ENCODE measurements at regions of chr6 and their contacts with region 1.

Region 1: GRCh38 chr6:24933868-24934401 is 1.8 kb downstream of the RIPOR2 start:
- DNase-seq: peak; percentile 88
- H3K4me3 Mint-ChIP-seq: peak overlapping the region; percentile 89
- H3K27ac Mint-ChIP-seq: peak overlapping the region; percentile 95
- H3K4me1 Mint-ChIP-seq: peaks cover 86% of the 10 kb centered on the region
- H3K27me3 Mint-ChIP-seq: no peaks in the 10 kb centered on the region

Region 2: GRCh38 chr6:24774696-24775519 is 159.0 kb before region 1 on chr6 and contains the start of gene GMNN:
- intact Hi-C with region 1: loop called (anchors 5 kb)
- DNase-seq: peak; percentile 100
- H3K4me3 Mint-ChIP-seq: peak within 1 kb of the TSS; percentile 99
- H3K27ac Mint-ChIP-seq: peak within 1 kb of the TSS; percentile 99
- H3K4me1 Mint-ChIP-seq: peaks cover 32% of the 10 kb centered on the region
- H3K27me3 Mint-ChIP-seq: no peaks in the 10 kb centered on the region
- total RNA-seq, gene GMNN: 71.0 and 76.8 TPM in 2 replicates

Region 3: GRCh38 chr6:24902782-24903181 is 31.2 kb before region 1 on chr6:
- intact Hi-C with region 1: loop called (anchors 5 kb)
- DNase-seq: no peak
- H3K4me3 Mint-ChIP-seq: peak overlapping the region; percentile 23
- H3K27ac Mint-ChIP-seq: peak overlapping the region; percentile 90
- H3K4me1 Mint-ChIP-seq: peaks cover 75% of the 10 kb centered on the region
- H3K27me3 Mint-ChIP-seq: no peaks in the 10 kb centered on the region

Region 4: DNA sequence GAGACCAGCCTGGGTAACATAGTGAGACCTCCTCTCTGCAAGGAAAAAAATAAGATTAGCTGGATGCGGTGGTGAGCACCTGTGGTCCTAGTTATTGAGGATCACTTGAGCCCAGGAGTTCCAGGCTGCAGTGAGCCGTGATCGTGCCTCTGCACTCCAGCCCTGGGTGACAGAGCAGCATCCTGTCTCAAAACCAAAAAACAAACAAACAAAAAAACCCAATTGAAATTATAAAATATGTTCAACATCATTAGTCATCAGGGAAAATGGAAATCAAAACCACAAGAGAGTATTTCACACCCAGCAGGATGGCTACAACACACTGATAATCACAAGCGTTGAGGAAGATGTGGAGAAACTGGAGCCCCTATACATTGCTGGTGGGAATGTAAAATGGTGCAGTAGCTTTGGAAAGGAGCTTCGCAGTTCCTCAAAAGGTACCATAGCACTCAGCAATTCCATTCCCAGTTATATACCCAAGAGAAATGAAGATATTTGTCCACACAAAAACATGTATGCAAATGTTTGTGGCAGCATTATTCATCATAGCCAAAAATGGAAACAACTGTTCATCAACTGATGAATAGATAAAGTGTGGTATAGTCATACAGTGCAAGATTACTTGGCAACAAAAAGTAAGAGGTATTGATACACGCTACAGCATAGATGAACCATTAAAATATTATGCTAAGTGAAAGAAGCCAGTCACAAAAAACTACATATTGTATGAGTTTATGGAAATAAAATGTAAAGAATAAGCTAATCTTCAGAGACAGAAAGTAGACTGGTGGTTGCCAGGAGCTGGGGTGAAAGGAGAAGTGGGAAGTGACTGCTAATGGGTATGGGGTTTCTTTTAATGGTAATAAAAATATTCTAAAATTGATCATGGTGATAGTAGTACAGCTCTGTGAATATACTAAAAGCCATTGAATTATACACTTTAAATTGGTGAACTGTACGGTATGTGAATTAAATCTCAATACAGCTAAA is 40.5 kb after region 1 on chr6:
- intact Hi-C with region 1: loop called (anchors 1 kb)
- DNase-seq: peak; percentile 71
- H3K4me3 Mint-ChIP-seq: peak overlapping the region; percentile 60
- H3K27ac Mint-ChIP-seq: peak overlapping the region; percentile 91
- H3K4me1 Mint-ChIP-seq: peaks cover 31% of the 10 kb centered on the region
- H3K27me3 Mint-ChIP-seq: no peaks in the 10 kb centered on the region

Region 5: DNA sequence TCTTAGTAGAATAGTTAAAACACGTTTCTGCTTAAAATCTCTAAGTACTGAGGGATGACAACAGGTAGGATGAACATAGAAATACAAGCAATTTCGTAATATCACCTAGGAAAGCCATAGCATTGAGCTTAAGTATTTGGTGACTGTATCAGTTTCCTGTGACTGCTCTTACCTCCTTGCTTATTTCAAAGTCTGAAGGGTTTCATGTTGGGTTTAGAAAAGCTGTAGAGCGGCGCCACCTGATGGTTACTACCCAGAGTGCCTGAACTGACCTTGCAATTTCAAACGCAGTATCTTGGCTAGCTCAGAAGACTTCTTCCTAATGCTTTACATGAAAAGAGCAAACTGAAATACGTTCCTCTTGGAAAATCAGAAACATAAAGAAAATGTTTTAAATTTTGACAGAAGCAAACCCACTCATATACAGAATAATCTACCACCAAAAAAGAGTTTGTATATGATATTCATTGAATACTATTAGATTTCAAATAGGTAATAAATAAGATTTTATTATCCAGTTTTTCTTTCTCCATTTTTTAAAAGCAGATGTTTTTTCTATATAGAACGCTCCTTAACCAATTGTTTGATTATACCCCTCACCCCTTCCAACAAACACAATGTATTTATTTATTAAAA is 84.1 kb after region 1 on chr6:
- intact Hi-C with region 1: loop called (anchors 1 kb)
- DNase-seq: peak; percentile 93
- H3K4me3 Mint-ChIP-seq: peak overlapping the region; percentile 31
- H3K27ac Mint-ChIP-seq: peak overlapping the region; percentile 84
- H3K4me1 Mint-ChIP-seq: peaks cover 33% of the 10 kb centered on the region
- H3K27me3 Mint-ChIP-seq: no peaks in the 10 kb centered on the region

Region 6: GRCh38 chr6:26025894-26026832 is 1092.2 kb after region 1 on chr6:
- intact Hi-C with region 1: loop called (anchors 10 kb)
- DNase-seq: peak; percentile 97
- H3K4me3 Mint-ChIP-seq: peak overlapping the region; percentile 93
- H3K27ac Mint-ChIP-seq: peak overlapping the region; percentile 98
- H3K4me1 Mint-ChIP-seq: peaks cover 64% of the 10 kb centered on the region
- H3K27me3 Mint-ChIP-seq: peaks cover 3% of the 10 kb centered on the region

Measured in activated CD4-positive, alpha-beta T cell treated with anti-CD3 and anti-CD28 coated beads, Interleukin-2, amount 10 ng/mL, durations not matched to agents 24 days and 14 days (primary cell).